Activated CD4-positive, alpha-beta memory T cell treated with anti-CD3 and anti-CD28 coated beads, Interleukin-2, amount 10 ng/mL, durations not matched to agents 7 days and 5 days (primary cell): ENCODE measurements at regions of chr7 and their contacts with region 1.

Region 1: GRCh38 chr7:111108496-111108895 is 17.6 kb downstream of the LRRN3 start:
- DNase-seq: no peak
- H3K4me3 Mint-ChIP-seq: no peak overlapping the region
- H3K27ac Mint-ChIP-seq: no peak overlapping the region
- H3K4me1 Mint-ChIP-seq: peaks cover 2% of the 10 kb centered on the region
- H3K27me3 Mint-ChIP-seq: no peaks in the 10 kb centered on the region

Region 2: GRCh38 chr7:111098011-111098925 is 10.2 kb before region 1 on chr7:
- CTCF ChIA-PET with region 1: interaction called, 12 read pairs
- POLR2A ChIA-PET with region 1: no interaction called
- DNase-seq: peak; percentile 73
- H3K4me3 Mint-ChIP-seq: peak overlapping the region; percentile 37
- H3K27ac Mint-ChIP-seq: peak overlapping the region; percentile 18
- H3K4me1 Mint-ChIP-seq: peaks cover 37% of the 10 kb centered on the region
- H3K27me3 Mint-ChIP-seq: no peaks in the 10 kb centered on the region

Region 3: GRCh38 chr7:111931016-111931517 is 822.6 kb after region 1 on chr7:
- CTCF ChIA-PET with region 1: no interaction called
- POLR2A ChIA-PET with region 1: no interaction called
- DNase-seq: no peak
- H3K4me3 Mint-ChIP-seq: no peak overlapping the region
- H3K27ac Mint-ChIP-seq: no peak overlapping the region
- H3K4me1 Mint-ChIP-seq: no peaks in the 10 kb centered on the region
- H3K27me3 Mint-ChIP-seq: no peaks in the 10 kb centered on the region